ENCODE measurements at regions of chr9 and their contacts with region 1.

Region 1: DNA sequence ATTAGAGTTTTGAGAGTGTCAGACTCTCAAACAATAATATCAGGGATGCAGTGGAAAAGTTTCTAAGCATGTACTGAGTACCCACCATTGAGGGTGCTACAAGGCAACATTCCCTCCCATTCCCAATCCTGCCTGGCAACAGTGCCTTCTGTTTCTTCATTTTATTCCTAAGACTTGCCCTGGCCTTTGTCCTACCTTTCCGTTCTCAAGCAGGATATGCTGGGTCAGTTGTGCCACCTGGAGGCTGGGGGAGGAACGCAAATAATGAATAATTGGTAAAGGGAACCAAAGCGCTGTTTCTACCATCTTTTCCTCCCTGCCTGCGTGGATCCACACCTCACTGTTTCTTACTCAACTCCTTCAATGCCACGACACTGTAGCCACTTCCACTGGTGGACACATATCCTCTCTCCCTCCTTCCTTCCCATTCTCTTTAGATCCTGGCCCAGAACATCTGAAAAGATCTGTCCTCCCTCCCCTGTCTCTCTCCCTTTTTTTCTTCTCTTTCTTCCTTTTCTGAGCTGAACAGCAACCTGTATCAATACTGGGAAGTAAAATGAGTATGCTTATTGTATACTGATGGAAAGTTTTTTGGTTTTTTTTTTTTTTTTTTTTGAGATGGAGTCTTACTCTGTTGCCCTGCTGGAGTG is 149.5 kb downstream of the C9orf152 start:
- DNase-seq: peak in 2 of 3 donors; percentile 59 to 65
- ATAC-seq: peak; percentile 67 to 72
- H3K4me3 ChIP-seq: no peak overlapping the region
- H3K27ac ChIP-seq: no peak overlapping the region
- H3K4me1 ChIP-seq: no peaks in the 10 kb centered on the region
- H3K27me3 ChIP-seq: no peaks in the 10 kb centered on the region

Region 2: GRCh38 chr9:110152704-110153374 is 94.4 kb after region 1 on chr9:
- intact Hi-C with region 1: loop called in 1 of 4 experiments (anchors 10 kb)
- DNase-seq: peak in 1 of 3 donors; percentile 24
- ATAC-seq: peak in 1 of 2 donors; percentile 40
- H3K4me3 ChIP-seq: no peak overlapping the region
- H3K27ac ChIP-seq: peak overlapping the region; percentile 34
- H3K4me1 ChIP-seq: peaks cover 31% of the 10 kb centered on the region
- H3K27me3 ChIP-seq: no peaks in the 10 kb centered on the region

Measured in right cardiac atrium (tissue), 5 donors.